Panc1 (cell line): ENCODE measurements at regions of chr1 and their contacts with region 1.

Region 1: GRCh38 chr1:205658943-205659581 is 21.2 kb downstream of the SLC45A3 start:
- DNase-seq: no peak
- ATAC-seq: peak; percentile 87
- H3K4me3 ChIP-seq: no peak overlapping the region
- H3K27ac ChIP-seq: no peak overlapping the region
- H3K4me1 ChIP-seq: peaks cover 2% of the 10 kb centered on the region
- H3K27me3 ChIP-seq: no peaks in the 10 kb centered on the region
- CTCF ChIP-seq: peak; percentile 93

Region 2: DNA sequence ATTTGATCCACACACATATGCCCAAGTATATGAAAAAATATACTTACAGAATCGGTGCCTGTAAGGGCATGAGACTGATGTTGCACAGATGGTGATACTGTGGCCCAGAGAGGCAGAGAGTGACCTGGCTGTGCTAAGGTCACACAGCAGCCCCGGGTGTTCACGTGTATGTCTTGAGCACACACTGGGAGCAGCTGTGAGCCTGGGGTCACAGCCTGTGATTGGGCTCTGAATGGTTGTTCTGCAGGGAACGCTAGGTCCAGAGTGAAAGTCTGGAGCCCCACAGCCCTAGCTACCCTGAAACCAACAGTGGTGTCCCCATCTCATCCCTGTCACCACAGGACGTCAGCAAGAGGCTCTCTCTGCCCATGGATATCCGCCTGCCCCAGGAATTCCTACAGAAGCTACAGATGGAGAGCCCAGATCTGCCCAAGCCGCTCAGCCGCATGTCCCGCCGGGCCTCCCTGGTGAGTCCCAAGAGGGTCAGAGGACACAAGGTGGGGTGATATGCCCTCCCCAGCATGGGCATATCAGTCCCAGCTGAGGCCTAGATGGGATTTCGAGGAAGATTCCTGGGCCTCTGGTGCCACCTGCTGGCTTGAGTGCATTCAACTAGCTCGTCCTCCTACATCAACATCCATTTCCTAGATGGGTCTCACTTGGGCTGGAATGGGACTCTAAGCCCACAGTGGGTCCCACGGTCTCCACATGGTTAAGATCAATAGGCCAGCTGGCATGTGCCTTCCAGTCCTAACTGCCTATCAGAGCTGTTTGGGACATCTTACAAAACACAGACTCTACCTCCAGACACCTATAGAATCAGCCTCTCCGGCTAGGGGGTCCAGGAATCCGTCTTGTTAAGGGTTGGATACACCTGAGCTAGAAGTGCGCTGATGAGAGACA is 134.9 kb before region 1 on chr1:
- CTCF ChIA-PET with region 1: interaction called, 17 read pairs
- POLR2A ChIA-PET with region 1: no interaction called
- in situ Hi-C with region 1: no loop called
- intact Hi-C with region 1: loop called (anchors 2 kb)
- DNase-seq: peak; percentile 48
- ATAC-seq: peak; percentile 80
- H3K4me3 ChIP-seq: no peak overlapping the region
- H3K27ac ChIP-seq: no peak overlapping the region
- H3K4me1 ChIP-seq: peaks cover 13% of the 10 kb centered on the region
- H3K27me3 ChIP-seq: no peaks in the 10 kb centered on the region
- CTCF ChIP-seq: peak; percentile 86

Region 3: DNA sequence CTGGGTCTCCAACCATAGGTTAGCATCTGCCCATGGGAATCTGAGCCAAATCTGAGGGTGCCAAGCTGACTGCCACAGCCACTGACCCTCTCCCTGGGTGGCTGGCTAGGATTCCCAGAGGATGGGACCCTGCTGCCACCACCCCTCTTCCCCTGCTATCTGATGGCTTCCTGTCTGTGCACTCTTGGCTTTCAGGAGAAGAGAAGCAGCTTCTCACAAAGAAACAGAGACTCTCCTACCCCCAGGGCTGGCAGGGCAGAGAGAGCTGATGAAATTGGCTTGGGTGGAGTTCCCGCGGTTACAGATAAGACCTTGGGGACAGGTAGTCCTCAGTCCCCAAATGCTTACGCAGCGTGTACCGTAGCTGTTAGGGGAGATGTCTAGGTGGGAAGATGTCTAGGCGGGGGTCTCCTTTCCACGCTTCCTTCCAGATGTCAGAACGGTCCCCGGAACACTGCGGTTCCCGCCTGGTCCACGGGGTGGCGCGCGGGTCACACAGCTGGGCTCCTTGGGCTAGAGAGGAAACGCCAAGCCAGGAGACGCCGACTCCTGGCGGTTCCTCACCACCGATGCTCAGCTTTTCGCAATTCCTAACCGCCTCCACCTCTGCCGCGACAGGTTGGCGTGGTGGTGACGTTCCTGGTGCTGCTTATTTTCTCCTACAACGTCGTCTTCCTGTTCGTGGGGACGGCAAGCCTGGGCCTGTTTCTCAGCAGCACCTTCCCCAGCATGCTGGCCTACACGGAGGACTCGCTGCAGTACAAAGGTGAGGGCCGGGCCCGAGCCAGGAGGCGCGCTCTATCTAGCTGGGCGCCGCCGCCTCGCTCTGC is 67.3 kb before region 1 on chr1:
- CTCF ChIA-PET with region 1: interaction called, 110 read pairs
- POLR2A ChIA-PET with region 1: no interaction called
- in situ Hi-C with region 1: no loop called
- intact Hi-C with region 1: loop called (anchors 2 kb)
- DNase-seq: peak; percentile 58
- ATAC-seq: peak; percentile 96
- H3K4me3 ChIP-seq: peak overlapping the region; percentile 27 to 56
- H3K27ac ChIP-seq: peak overlapping the region; percentile 41
- H3K4me1 ChIP-seq: no peaks in the 10 kb centered on the region; the same call in 1 of the 2 replicates
- H3K27me3 ChIP-seq: no peaks in the 10 kb centered on the region
- CTCF ChIP-seq: peak; percentile 99

Region 4: DNA sequence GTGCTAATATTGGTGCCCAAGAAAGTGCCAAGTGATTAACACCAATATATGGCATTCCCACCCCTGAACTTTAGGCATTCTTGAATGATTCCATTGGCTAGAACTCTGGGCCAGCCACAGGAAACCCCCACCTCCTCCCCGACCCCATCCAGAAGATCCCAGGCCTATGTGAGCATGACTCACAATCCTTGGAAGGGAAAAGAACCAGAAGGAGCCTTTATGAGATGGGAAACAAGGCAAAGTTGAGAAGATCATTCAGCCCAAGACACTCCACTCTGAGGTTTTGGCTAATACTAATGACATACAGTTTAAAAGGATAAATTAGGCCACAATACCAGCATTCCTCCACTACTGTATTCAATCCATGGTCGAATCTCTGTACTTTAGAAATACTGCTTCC is 49.0 kb before region 1 on chr1:
- CTCF ChIA-PET with region 1: no interaction called
- POLR2A ChIA-PET with region 1: no interaction called
- in situ Hi-C with region 1: no loop called
- intact Hi-C with region 1: no loop called
- DNase-seq: no peak
- ATAC-seq: no peak
- H3K4me3 ChIP-seq: no peak overlapping the region
- H3K27ac ChIP-seq: no peak overlapping the region
- H3K4me1 ChIP-seq: 0 out of 2 replicates have a peak, but pooled peaks cover 6% of the 10 kb centered on the region
- H3K27me3 ChIP-seq: no peaks in the 10 kb centered on the region
- CTCF ChIP-seq: no peak

Region 5: GRCh38 chr1:205637854-205638468 is 21.1 kb before region 1 on chr1:
- CTCF ChIA-PET with region 1: interaction called, 11 read pairs
- POLR2A ChIA-PET with region 1: no interaction called
- in situ Hi-C with region 1: no loop called
- intact Hi-C with region 1: no loop called
- DNase-seq: no peak
- ATAC-seq: no peak
- H3K4me3 ChIP-seq: no peak overlapping the region
- H3K27ac ChIP-seq: no peak overlapping the region
- H3K4me1 ChIP-seq: no peaks in the 10 kb centered on the region; the same call in 1 of the 2 replicates
- H3K27me3 ChIP-seq: no peaks in the 10 kb centered on the region
- CTCF ChIP-seq: no peak

Region 6: GRCh38 chr1:205729945-205730610 is 71.0 kb after region 1 on chr1:
- CTCF ChIA-PET with region 1: interaction called, 11 read pairs
- POLR2A ChIA-PET with region 1: no interaction called
- in situ Hi-C with region 1: no loop called
- intact Hi-C with region 1: no loop called
- DNase-seq: no peak
- ATAC-seq: 0 out of 2 replicates have a peak, but pooled peaks have one; percentile 24
- H3K4me3 ChIP-seq: no peak overlapping the region
- H3K27ac ChIP-seq: no peak overlapping the region
- H3K4me1 ChIP-seq: peaks cover 3% of the 10 kb centered on the region; the same call in 1 of the 2 replicates
- H3K27me3 ChIP-seq: no peaks in the 10 kb centered on the region
- CTCF ChIP-seq: no peak

Region 7: DNA sequence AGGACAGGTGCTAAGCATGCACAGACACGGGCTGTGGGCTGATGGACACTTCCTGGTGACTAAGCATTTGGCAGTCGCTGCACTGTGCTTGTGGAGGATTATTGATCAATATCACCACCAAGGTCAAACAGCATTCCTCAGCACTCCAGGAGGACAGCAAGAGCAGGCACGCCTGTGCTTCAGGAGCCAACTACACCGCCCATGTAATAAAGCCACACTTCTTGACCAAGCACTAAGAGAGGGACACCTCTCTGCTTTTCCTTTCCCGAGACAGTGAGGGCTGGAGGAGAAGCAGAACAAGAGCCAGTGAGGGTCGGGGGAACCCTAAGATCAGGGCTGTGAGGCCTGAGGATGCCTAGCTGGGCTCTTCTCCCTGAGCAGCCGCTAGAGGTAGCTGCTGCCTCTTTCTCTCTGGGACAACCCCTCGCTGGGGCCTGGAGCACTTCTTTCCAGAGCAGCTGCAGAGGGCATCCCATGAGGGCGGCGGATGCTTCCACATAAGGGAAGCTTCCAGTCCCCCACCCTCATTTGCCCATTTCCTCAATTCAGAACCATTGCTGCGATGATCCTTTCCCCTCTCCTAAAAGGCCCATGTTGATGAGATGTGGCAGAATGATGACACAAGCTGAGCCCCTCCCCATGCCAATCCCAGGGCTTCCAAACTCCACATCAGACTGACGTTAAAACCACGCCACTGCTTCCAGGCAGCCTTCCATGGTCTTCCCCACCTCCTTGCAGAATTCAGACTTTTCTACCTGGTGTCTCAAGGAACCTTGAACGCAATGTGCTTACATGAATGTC is 325.1 kb after region 1 on chr1:
- CTCF ChIA-PET with region 1: interaction called, 13 read pairs
- POLR2A ChIA-PET with region 1: no interaction called
- in situ Hi-C with region 1: no loop called
- intact Hi-C with region 1: no loop called
- DNase-seq: peak; percentile 39
- ATAC-seq: peak; percentile 96
- H3K4me3 ChIP-seq: no peak overlapping the region
- H3K27ac ChIP-seq: no peak overlapping the region
- H3K4me1 ChIP-seq: no peaks in the 10 kb centered on the region
- H3K27me3 ChIP-seq: no peaks in the 10 kb centered on the region
- CTCF ChIP-seq: peak; percentile 94